ENCODE measurements at regions of chr10 and their contacts with region 1.

Region 1: GRCh38 chr10:47261121-47261520 is 38.9 kb upstream of the GDF10 start:
- DNase-seq: no peak
- ATAC-seq: peak in 1 of 2 donors; percentile 16

Region 2: DNA sequence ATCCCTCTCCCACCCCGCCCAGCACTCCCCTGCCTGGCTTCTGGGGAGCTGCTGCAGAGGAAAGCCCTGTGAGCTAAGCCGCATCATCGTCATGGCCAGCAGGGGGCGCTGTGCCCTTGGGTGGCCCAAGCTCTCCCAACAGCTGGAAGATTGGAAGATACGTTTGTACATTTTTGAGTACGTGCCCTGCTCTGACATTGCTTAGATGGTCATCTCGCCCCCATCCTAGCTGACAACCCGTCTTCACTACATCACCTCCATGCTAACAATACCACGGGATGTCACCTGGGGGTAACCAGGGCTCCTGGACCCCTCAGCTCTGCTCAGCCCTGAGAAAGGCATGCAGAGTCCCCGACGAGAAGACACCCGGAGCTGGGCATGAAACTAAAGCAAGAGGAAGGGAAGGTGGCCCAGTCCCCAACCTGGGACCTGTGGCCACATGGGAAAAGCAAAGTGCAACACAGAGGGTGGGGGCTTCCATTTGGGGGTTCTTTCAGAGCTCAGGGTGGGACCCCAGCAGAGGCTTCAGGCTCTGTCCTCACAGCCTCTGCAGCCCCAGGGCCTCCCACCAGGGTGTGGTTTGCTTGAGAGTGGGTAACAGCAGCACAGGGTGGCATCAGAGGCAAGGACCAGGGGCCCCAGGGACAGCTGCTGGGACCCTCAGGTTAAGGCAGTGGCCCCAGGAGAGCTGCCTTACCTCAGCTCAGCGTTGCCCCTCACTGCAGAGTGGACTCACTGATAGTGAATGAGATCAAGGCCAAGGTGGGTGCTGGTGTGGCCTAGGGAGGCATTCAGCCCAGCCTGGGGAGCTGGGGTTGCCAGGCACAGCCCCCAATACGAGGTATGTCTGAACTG is 213.2 kb before region 1 on chr10:
- intact Hi-C with region 1: loop called in 1 of 2 experiments (anchors 5 kb)
- DNase-seq: peak; percentile 85
- ATAC-seq: peak; percentile 57 to 65

Region 3: GRCh38 chr10:47374611-47375536 is 113.8 kb after region 1 on chr10:
- intact Hi-C with region 1: no loop called
- DNase-seq: no peak
- ATAC-seq: peak in 1 of 2 donors; percentile 57